Stomach (tissue), 19 donors: ENCODE measurements at regions of chr14 and their contacts with region 1.

Region 1: DNA sequence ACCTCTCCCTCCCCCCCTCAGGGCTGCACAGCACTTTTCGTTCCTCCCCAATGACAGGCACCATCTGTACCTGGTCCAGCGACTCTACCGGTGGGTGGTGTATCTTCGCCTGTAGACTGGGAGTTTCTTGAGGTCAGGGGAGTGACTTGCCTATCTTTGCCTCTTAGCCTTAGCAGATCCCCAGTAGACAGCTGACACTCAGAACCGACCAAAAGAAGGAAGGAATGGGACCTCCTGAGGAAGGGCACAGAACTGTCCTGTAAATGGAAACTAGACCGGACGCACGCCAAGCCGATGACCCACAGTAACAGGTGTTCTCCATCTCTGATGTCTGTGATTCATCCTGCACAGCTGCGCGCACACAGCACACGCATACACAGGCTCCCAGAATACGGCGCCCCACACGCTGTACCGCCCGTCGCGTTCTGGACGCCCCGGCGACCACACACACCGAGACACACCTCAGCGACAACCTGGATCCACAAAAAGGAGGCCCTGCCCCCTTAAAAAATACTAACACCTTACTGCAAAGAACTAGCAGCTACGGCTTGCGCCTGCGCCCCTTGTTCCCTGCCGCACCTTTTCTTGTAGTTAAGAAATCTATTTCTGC is 673 bp upstream of the TTC9 start:
- DNase-seq: peak; percentile 63 to 72
- H3K4me3 ChIP-seq: peak overlapping the region; percentile 66 to 92 (median 82)
- H3K27ac ChIP-seq: peak overlapping the region; percentile 56 to 86 (median 66)
- H3K4me1 ChIP-seq: peaks cover 7 to 36% (median 30%) of the 10 kb centered on the region in 4 donors
- H3K27me3 ChIP-seq: peaks cover 0 to 46% (median 0%) of the 10 kb centered on the region in 3 donors
- CTCF ChIP-seq: no peak
- EP300 ChIP-seq: no peak
- POLR2A ChIP-seq: no peak

Region 2: GRCh38 chr14:70714055-70714621 is 73.1 kb after region 1 on chr14:
- intact Hi-C with region 1: loop called (anchors 10 kb)
- DNase-seq: peak; percentile 47 to 88
- H3K4me3 ChIP-seq: no peak overlapping the region
- H3K27ac ChIP-seq: peak overlapping the region in 2 of 5 donors; percentile 16 to 63
- H3K4me1 ChIP-seq: peaks cover 0 to 31% (median 14%) of the 10 kb centered on the region in 4 donors
- H3K27me3 ChIP-seq: no peaks in the 10 kb centered on the region
- CTCF ChIP-seq: peak in 5 of 7 experiments; percentile 45 to 77 (median 75)
- EP300 ChIP-seq: no peak
- POLR2A ChIP-seq: no peak

Region 3: DNA sequence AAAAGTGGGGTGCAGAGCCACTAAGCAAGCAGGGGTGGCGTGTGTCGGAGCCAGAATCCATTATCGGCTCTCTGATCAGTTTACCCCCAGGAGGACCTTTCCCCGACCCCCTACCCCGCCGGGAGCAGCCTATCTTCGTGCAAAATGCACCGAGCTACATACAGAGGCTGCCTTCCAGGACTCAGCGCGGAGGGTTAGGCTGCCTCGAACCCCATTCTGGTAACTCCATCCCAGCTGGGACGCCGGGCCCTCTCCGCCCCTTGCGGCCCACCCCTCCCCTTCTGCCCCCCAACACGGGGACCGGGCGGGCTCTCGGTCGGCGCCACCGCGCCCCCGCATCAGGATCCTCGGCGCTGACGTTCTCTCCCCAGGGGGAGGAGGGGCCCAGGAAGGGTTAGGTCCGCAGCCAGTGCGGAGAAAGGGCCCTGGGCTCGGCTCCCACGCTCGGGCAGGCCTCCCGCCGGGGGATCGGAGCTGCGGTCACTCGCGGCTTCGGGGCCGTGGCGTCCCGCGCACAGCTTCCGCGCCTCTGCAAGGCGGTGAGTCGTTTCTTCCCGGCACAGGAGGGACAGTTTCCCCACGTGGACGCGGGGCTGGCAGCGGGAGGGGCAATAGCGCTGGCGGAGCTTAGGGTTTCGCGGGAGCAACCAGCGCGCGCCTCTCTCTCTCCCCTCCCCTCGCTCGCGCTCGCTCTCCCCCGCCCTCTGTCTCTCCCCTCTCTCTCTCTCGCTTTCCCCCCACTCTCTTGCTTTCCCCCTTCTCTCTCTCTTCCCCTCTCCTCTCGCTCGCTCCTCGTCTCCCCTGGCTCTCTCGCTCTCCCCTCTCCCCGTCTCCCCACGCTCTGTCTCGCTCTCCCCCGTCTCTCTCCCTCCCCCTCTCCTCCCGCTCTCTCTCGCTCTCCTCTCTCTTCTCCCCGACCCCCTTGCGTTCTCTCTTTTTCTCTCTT is 180.8 kb after region 1 on chr14:
- intact Hi-C with region 1: loop called (anchors 10 kb)
- DNase-seq: peak; percentile 56 to 82
- H3K4me3 ChIP-seq: peak overlapping the region; percentile 48 to 77 (median 66)
- H3K27ac ChIP-seq: peak overlapping the region in 4 of 5 donors; percentile 38 to 51 (median 46)
- H3K4me1 ChIP-seq: peaks cover 13 to 30% (median 26%) of the 10 kb centered on the region in 4 donors
- H3K27me3 ChIP-seq: peaks cover 0 to 37% (median 0%) of the 10 kb centered on the region in 3 donors
- CTCF ChIP-seq: no peak
- EP300 ChIP-seq: no peak
- POLR2A ChIP-seq: no peak